Activated T-helper 2 cell treated with anti-CD3 and anti-CD28 coated beads, Interferon-gamma antibody, Interleukin-2, Interleukin-4, amounts not matched to agents 10 μg/mL and 5 μg/mL and 100 μg/mL, durations not matched to agents 14 hours and 24 hours and 36 hours (primary cell): ENCODE measurements at regions of chr11 and their contacts with region 1.

Region 1: GRCh38 chr11:74170694-74171629 is at the starts of genes C2CD3 and PPME1:
- DNase-seq: peak; percentile 99
- H3K4me3 Mint-ChIP-seq: no peak within 1 kb of the TSS
- H3K27ac Mint-ChIP-seq: no peak within 1 kb of the TSS
- H3K4me1 Mint-ChIP-seq: peaks cover 13% of the 10 kb centered on the region
- H3K27me3 Mint-ChIP-seq: no peaks in the 10 kb centered on the region
- total RNA-seq, gene C2CD3: 32.5 and 33.1 TPM in 2 replicates
- total RNA-seq, gene PPME1: 67.1 and 67.5 TPM in 2 replicates

Region 2: DNA sequence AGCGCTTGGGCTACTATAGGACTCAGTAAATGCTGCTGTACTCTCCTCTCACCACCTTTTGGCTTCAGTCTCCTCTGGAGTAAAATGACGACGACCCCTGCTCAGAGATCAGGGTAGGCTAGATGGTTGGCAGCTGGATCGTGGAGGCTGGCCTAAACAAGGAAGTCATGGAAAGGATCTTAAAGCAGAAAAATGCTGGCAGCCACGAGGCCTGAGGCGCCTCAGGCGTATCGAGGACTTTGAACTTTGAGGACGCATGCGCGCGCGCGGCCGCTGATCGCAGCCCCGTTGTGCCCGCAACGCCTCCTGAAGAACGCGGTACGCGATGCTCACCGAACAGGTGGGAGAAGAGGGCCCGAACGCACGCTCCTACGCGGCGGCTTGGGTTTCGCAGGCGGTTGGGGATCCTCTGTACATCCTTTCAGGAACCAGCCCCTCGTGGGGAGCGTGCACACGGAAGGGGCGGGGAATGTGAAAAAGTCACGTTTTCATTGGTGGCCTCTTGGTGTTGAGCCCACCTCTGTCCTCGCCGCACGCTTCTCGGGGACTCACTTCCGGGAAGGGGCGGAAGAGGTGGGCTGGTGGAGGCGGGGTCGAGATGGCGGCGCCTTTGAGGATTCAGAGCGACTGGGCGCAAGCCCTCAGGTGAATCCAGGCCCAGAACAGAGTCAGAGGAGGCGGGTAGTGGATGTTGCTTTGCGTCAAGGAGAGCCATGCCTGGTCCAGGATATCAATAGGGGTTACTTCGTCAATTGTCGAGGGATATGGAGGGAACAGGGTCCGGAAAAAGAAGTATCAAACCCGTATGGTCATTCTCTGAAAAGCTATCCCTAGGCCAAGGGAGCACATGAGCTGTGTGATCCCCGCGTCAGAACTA is 294.3 kb before region 1 on chr11 and contains the starts of genes COA4 and PAAF1:
- intact Hi-C with region 1: loop called (anchors 5 kb)
- DNase-seq: peak; percentile 93
- H3K4me3 Mint-ChIP-seq: peak within 1 kb of the TSS; percentile 98
- H3K27ac Mint-ChIP-seq: peak within 1 kb of the TSS; percentile 96
- H3K4me1 Mint-ChIP-seq: peaks cover 19% of the 10 kb centered on the region
- H3K27me3 Mint-ChIP-seq: no peaks in the 10 kb centered on the region
- total RNA-seq, gene COA4: 90.2 and 99.9 TPM in 2 replicates
- total RNA-seq, gene PAAF1: 25.4 and 28.7 TPM in 2 replicates

Region 3: GRCh38 chr11:73982969-73983740 is 187.8 kb before region 1 on chr11:
- intact Hi-C with region 1: loop called (anchors 2 kb)
- DNase-seq: peak; percentile 94
- H3K4me3 Mint-ChIP-seq: peak overlapping the region; percentile 100
- H3K27ac Mint-ChIP-seq: peak overlapping the region; percentile 97
- H3K4me1 Mint-ChIP-seq: peaks cover 39% of the 10 kb centered on the region
- H3K27me3 Mint-ChIP-seq: no peaks in the 10 kb centered on the region

Region 4: GRCh38 chr11:74094400-74094799 is 76.6 kb before region 1 on chr11:
- intact Hi-C with region 1: no loop called
- DNase-seq: no peak
- H3K4me3 Mint-ChIP-seq: no peak overlapping the region
- H3K27ac Mint-ChIP-seq: no peak overlapping the region
- H3K4me1 Mint-ChIP-seq: peaks cover 2% of the 10 kb centered on the region
- H3K27me3 Mint-ChIP-seq: no peaks in the 10 kb centered on the region

Region 5: GRCh38 chr11:74203966-74204365 is 33.0 kb after region 1 on chr11:
- intact Hi-C with region 1: loop called (anchors 2 kb)
- DNase-seq: no peak
- H3K4me3 Mint-ChIP-seq: no peak overlapping the region
- H3K27ac Mint-ChIP-seq: no peak overlapping the region
- H3K4me1 Mint-ChIP-seq: peaks cover 20% of the 10 kb centered on the region
- H3K27me3 Mint-ChIP-seq: no peaks in the 10 kb centered on the region

Region 6: GRCh38 chr11:74492974-74493790 is 322.2 kb after region 1 on chr11 and contains the start of gene LIPT2:
- intact Hi-C with region 1: loop called (anchors 5 kb)
- DNase-seq: peak; percentile 95
- H3K4me3 Mint-ChIP-seq: peak within 1 kb of the TSS; percentile 85
- H3K27ac Mint-ChIP-seq: peak within 1 kb of the TSS; percentile 78
- H3K4me1 Mint-ChIP-seq: peaks cover 16% of the 10 kb centered on the region
- H3K27me3 Mint-ChIP-seq: peaks cover 14% of the 10 kb centered on the region
- total RNA-seq, gene LIPT2: 5.3 and 5.7 TPM in 2 replicates

Region 7: DNA sequence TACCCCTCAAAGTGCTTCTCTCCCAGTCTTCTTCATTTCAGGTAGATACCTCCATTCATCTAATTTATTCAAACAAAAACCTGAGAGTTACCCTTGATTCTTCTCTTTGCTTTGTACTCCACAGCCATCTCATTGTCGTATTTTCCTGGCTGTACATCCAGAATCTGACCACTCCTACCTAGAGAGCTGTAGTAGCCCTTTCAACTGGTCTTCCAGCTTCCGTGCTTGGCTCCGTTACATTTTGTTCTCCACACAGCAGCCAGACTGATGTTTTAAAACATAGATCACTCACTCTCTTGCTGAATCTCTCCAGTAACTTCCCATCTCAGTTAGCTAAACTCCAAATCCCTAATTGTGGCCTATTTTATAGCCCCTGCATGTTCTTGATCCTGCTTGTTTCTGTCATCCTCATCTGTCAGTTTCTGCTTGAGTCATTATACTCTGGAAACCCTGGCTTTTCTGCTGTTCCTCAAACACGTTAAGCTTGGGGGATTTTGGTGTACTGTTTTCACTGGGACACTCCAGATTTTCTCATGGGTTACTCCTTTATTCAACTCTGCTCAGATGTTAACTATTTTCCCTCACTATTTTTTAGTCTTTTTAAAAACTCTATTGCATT is 785.5 kb after region 1 on chr11:
- intact Hi-C with region 1: no loop called
- DNase-seq: no peak
- H3K4me3 Mint-ChIP-seq: no peak overlapping the region
- H3K27ac Mint-ChIP-seq: no peak overlapping the region
- H3K4me1 Mint-ChIP-seq: peaks cover 49% of the 10 kb centered on the region
- H3K27me3 Mint-ChIP-seq: no peaks in the 10 kb centered on the region